ENCODE measurements at regions of chr14 and their contacts with region 1.

Region 1: DNA sequence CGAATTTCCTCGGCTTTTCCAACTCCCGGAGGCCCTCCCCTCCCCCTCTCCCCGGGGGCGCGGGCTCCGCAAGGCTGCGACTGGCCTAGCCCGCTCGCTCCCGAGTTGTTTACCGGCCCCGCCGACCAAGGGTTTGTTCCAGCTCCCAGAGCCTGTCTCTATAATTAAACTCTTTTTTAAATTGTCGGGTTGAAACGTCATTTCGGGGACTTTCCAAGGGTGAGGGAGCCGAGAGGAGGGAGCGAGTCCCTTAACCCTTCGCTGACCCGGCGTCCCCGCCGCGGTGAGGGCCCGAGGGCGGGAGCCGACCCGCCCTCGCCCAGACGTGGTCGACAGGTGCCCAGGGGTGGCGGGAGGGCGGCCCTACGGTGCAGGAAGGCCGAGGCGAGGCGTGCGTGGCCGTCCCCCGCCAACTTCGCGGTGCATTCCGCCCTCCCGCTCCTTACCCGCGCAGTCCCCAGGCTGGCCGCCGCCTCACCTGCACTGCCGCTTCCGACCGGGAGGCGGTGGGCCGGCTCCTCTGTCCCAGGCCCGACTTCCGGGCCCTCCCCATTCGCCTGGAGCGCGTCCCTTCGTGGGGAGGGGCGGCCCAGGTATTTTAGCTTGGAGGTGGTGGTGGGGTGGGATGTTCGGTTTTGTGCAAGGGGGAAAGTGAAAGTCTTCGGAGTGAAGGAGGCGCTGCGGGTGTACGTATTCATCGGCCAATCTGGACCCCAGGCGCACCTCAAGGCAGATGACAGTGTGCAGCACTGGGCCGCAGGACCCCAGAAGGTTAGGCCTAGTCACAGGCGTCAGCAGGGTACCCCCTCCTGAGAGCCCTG is 2.9 kb upstream of the ZFP36L1 start:
- DNase-seq: peak in 34 of 35 experiments; percentile 71 to 92 (median 79)
- ATAC-seq: peak; percentile 50 to 53 (median 52)
- H3K4me3 ChIP-seq: peak overlapping the region; percentile 87 to 95
- H3K4me3 Mint-ChIP-seq: peak overlapping the region; percentile 91 to 98 (median 96)
- H3K27ac ChIP-seq: peak overlapping the region; percentile 100
- H3K27ac Mint-ChIP-seq: peak overlapping the region; percentile 96 to 98
- H3K4me1 ChIP-seq: peaks cover 8 to 33% of the 10 kb centered on the region in 2 experiments
- H3K4me1 Mint-ChIP-seq: peaks cover 27 to 35% (median 33%) of the 10 kb centered on the region in 3 donors
- H3K27me3 ChIP-seq: no peaks in the 10 kb centered on the region
- H3K27me3 Mint-ChIP-seq: no peaks in the 10 kb centered on the region

Region 2: DNA sequence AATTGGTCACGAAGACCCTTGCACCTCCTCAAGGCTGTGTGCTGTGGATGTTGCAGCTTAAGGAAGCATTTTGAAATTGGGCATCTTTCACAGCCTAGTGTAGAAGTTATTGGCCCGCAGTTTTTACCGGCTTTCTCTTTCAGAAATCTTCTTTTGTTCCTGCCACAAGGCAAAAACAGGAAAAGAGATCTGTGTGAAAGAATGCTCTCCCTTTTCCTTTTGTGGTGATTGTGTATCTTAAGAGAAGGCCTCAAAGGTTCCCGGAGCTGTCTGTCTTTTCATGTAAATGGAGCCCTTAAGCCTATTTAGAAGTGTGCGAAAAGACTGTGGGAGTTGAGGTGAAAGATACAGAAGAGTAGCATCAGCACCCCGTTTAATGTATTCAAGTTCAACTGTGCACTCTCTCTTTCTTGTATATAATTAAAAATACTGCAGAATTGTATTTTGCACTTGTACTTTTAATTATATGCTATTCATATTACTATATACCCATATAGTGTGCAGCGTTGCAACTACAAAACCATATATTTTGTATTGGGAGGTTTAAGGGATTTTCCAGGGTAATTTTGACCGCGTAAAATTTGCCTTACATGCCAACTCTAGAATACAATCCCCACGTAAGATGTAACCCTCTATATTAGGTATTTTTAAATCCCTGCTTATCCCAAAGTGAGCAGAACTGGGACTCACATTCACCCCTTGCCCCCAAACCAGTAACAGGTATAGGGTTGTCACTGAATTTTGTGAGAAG is 534.5 kb before region 1 on chr14:
- CTCF ChIA-PET with region 1: interaction called, 3 to 5 read pairs
- POLR2A ChIA-PET with region 1: interaction called in 1 of 2 experiments, 16 read pairs
- DNase-seq: no peak
- ATAC-seq: peak; percentile 48 to 80 (median 67)
- H3K4me3 ChIP-seq: no peak overlapping the region
- H3K4me3 Mint-ChIP-seq: peak overlapping the region; percentile 2 to 63 (median 39)
- H3K27ac ChIP-seq: peak overlapping the region; percentile 59
- H3K27ac Mint-ChIP-seq: peak overlapping the region; percentile 81 to 91
- H3K4me1 ChIP-seq: peaks cover 33 to 59% of the 10 kb centered on the region in 2 experiments
- H3K4me1 Mint-ChIP-seq: peaks cover 51 to 75% (median 65%) of the 10 kb centered on the region in 3 donors
- H3K27me3 ChIP-seq: no peaks in the 10 kb centered on the region
- H3K27me3 Mint-ChIP-seq: no peaks in the 10 kb centered on the region

Region 3: DNA sequence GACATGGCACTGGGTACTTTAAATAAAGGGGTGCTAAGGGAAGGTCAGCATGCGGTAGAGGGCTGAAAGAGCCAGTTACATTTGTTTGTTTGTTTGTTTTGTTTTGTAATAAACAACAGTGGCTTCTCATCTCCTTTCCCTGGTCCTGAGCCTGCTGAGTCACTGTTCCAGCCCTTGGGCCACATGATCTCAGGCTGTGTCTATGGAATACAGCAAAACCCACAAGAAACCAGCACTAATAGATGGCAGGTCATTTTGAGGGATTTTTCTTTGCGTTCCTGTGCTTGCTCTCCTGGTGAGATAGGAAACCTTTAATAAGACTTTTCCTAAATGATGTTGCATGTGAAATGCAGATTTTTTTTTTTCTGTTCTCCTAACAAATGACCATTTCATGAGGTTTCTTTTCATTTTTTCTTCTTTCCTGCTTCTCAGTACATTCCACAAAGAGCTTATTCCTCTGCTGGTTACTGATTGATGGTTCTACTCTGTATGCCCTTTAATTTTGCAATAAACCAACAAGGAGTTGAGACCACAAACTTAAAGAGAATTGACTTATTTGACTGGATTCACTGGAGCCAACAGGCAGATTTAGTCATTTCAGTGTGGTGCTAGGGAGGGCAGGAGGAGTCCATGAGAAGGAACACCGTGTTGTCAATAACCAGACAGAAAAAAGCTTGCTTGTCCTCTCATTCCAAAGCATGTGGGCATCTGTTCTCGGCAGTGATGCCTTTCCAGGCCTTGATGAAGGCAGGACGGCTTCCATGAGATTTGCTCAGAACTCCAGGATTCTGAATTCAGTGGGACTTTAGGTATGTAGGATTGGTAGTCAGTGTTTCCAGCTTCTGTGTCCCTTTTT is 517.0 kb before region 1 on chr14:
- CTCF ChIA-PET with region 1: interaction called in 1 of 2 experiments, 3 read pairs
- POLR2A ChIA-PET with region 1: interaction called, 9 to 23 read pairs
- DNase-seq: no peak
- ATAC-seq: no peak
- H3K4me3 ChIP-seq: no peak overlapping the region
- H3K4me3 Mint-ChIP-seq: no peak overlapping the region
- H3K27ac ChIP-seq: no peak overlapping the region
- H3K27ac Mint-ChIP-seq: peak overlapping the region in 1 of 2 donors; percentile 18
- H3K4me1 ChIP-seq: peaks cover 31 to 38% of the 10 kb centered on the region in 2 experiments
- H3K4me1 Mint-ChIP-seq: peaks cover 61 to 81% (median 76%) of the 10 kb centered on the region in 3 donors
- H3K27me3 ChIP-seq: no peaks in the 10 kb centered on the region
- H3K27me3 Mint-ChIP-seq: no peaks in the 10 kb centered on the region

Region 4: GRCh38 chr14:68506021-68506644 is 289.7 kb before region 1 on chr14:
- CTCF ChIA-PET with region 1: interaction called in 1 of 2 experiments, 10 read pairs
- POLR2A ChIA-PET with region 1: interaction called, 3 to 18 read pairs
- DNase-seq: no peak
- ATAC-seq: no peak
- H3K4me3 ChIP-seq: no peak overlapping the region
- H3K4me3 Mint-ChIP-seq: peak overlapping the region; percentile 35 to 64 (median 40)
- H3K27ac ChIP-seq: peak overlapping the region; percentile 76
- H3K27ac Mint-ChIP-seq: peak overlapping the region; percentile 88 to 93
- H3K4me1 ChIP-seq: peaks cover 47 to 75% of the 10 kb centered on the region in 2 experiments
- H3K4me1 Mint-ChIP-seq: peaks cover 67 to 87% (median 84%) of the 10 kb centered on the region in 3 donors
- H3K27me3 ChIP-seq: peaks cover 0 to 4% of the 10 kb centered on the region in 2 experiments
- H3K27me3 Mint-ChIP-seq: no peaks in the 10 kb centered on the region

Region 5: DNA sequence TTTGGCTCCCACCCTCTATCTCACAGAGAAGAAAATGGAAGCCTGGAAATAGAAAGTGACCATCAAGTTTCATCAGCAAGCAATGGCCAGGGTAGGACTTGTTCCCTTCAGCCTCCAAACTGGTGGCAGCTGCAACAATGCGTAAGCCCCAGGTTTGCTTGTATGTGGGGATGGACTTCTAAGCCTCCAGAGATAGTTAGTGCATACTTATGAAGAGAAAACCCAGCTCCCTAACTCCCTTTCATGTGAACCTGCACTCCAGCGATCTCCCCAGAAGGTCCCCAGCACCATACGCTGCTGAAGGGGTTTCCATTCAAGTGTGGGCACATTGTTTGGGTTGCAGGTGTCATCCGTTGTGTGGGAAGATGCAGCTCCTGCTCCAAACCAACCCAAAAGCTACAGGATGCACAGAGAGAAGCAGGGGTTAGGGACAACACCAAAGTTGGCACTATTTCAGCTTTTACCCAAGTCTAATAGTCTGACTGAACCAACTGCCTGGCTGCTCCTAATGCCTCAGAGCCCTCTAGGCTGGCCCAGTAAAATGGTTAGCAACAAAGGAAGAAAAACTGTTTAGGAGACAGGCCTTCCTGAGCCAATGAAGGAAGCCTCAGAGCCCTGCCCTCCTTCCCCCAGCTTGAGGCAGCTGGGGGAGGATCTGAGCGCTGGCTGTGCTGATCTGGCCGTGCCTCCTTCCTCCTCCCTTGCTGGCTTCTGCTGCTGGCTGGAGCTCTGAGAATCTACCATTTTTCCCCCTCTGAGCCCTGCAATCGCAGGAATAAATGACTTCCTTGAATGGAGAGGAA is 15.2 kb before region 1 on chr14:
- CTCF ChIA-PET with region 1: interaction called, 5 to 9 read pairs
- POLR2A ChIA-PET with region 1: interaction called, 11 to 16 read pairs
- DNase-seq: peak in 11 of 35 experiments; percentile 14 to 61 (median 39)
- ATAC-seq: peak; percentile 14 to 36 (median 34)
- H3K4me3 ChIP-seq: peak overlapping the region; percentile 34 to 73
- H3K4me3 Mint-ChIP-seq: peak overlapping the region; percentile 70 to 80 (median 76)
- H3K27ac ChIP-seq: peak overlapping the region; percentile 71
- H3K27ac Mint-ChIP-seq: peak overlapping the region; percentile 92 to 99
- H3K4me1 ChIP-seq: peaks cover 39 to 64% of the 10 kb centered on the region in 2 experiments
- H3K4me1 Mint-ChIP-seq: peaks cover 87 to 92% (median 89%) of the 10 kb centered on the region in 3 donors
- H3K27me3 ChIP-seq: no peaks in the 10 kb centered on the region
- H3K27me3 Mint-ChIP-seq: no peaks in the 10 kb centered on the region

Region 6: DNA sequence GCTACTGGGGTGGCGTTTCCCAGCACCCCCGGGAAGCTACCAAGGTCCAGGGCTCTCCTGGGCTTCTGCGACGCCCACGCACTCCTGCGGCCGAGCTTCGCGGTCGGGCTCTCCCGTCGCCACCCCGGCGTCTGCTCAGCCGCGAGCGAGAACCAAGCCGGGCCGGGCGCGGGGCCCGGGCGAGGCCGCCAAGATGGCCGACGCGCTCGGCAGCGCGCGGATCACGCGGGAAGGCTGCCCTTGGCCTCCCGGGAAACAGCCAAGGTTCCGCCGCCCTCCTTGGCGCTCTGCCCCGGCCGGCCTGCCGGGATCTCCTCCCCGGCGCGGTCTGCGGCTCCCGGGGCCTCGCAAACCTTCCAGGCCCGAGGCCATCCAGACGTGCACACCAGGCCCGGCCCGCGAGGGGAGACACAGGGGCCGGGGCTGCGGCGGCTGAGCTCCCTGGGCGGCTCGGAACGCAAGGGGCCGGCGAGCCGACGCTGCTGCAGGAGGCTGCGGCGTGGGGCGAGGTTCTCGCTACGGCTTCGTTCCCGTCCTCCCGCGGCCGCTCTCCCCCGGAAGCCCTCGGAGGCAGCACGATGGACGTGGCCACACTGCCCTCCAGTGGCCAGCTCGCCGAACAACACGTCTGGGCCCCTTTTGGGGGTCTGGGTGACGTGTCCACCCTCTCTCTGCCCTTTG is 20.6 kb after region 1 on chr14:
- CTCF ChIA-PET with region 1: interaction called, 36 to 95 read pairs
- POLR2A ChIA-PET with region 1: interaction called, 13 to 26 read pairs
- DNase-seq: peak; percentile 63 to 93 (median 83)
- ATAC-seq: peak; percentile 76 to 82 (median 81)
- H3K4me3 ChIP-seq: peak overlapping the region; percentile 62 to 73
- H3K4me3 Mint-ChIP-seq: peak overlapping the region; percentile 79 to 89 (median 82)
- H3K27ac ChIP-seq: peak overlapping the region; percentile 97
- H3K27ac Mint-ChIP-seq: peak overlapping the region; percentile 97 to 98
- H3K4me1 ChIP-seq: peaks cover 32 to 82% of the 10 kb centered on the region in 2 experiments
- H3K4me1 Mint-ChIP-seq: peaks cover 69 to 86% (median 71%) of the 10 kb centered on the region in 3 donors
- H3K27me3 ChIP-seq: no peaks in the 10 kb centered on the region
- H3K27me3 Mint-ChIP-seq: no peaks in the 10 kb centered on the region

Region 7: GRCh38 chr14:68862954-68863594 is 67.3 kb after region 1 on chr14:
- CTCF ChIA-PET with region 1: no interaction called
- POLR2A ChIA-PET with region 1: no interaction called
- DNase-seq: peak; percentile 21 to 75 (median 55)
- ATAC-seq: peak in 3 of 4 experiments; percentile 32 to 51 (median 50)
- H3K4me3 ChIP-seq: no peak overlapping the region
- H3K4me3 Mint-ChIP-seq: no peak overlapping the region
- H3K27ac ChIP-seq: no peak overlapping the region
- H3K27ac Mint-ChIP-seq: no peak overlapping the region
- H3K4me1 ChIP-seq: no peaks in the 10 kb centered on the region
- H3K4me1 Mint-ChIP-seq: no peaks in the 10 kb centered on the region
- H3K27me3 ChIP-seq: no peaks in the 10 kb centered on the region
- H3K27me3 Mint-ChIP-seq: no peaks in the 10 kb centered on the region